AG04450 (cell line): ENCODE measurements at regions of chr14 and their contacts with region 1.

Region 1: GRCh38 chr14:77707724-77708408 is at the starts of genes ALKBH1 and SLIRP:
- DNase-seq: peak; percentile 36
- H3K4me3 ChIP-seq: peak within 1 kb of the TSS; percentile 94
- H3K27ac ChIP-seq: peak within 1 kb of the TSS; percentile 49
- H3K27me3 ChIP-seq: no peaks in the 10 kb centered on the region
- CTCF ChIP-seq: no peak
- polyA plus RNA-seq, gene ALKBH1: 12.7 and 14.0 TPM in 2 replicates
- polyA plus RNA-seq, gene SLIRP: 244 and 308 TPM in 2 replicates

Region 2: GRCh38 chr14:77641534-77642341 is 66.1 kb before region 1 on chr14:
- CTCF ChIA-PET with region 1: no interaction called
- POLR2A ChIA-PET with region 1: no interaction called
- DNase-seq: no peak
- H3K4me3 ChIP-seq: peak overlapping the region; percentile 44
- H3K27ac ChIP-seq: peak overlapping the region; percentile 52
- H3K27me3 ChIP-seq: no peaks in the 10 kb centered on the region
- CTCF ChIP-seq: no peak

Region 3: GRCh38 chr14:77654001-77654441 is 53.8 kb before region 1 on chr14:
- CTCF ChIA-PET with region 1: interaction called, 14 read pairs
- POLR2A ChIA-PET with region 1: no interaction called
- DNase-seq: no peak
- H3K4me3 ChIP-seq: no peak overlapping the region
- H3K27ac ChIP-seq: no peak overlapping the region
- H3K27me3 ChIP-seq: no peaks in the 10 kb centered on the region
- CTCF ChIP-seq: no peak